Dorsolateral prefrontal cortex (tissue), 120 donors: ENCODE measurements at regions of chr2 and their contacts with region 1.

Region 1: DNA sequence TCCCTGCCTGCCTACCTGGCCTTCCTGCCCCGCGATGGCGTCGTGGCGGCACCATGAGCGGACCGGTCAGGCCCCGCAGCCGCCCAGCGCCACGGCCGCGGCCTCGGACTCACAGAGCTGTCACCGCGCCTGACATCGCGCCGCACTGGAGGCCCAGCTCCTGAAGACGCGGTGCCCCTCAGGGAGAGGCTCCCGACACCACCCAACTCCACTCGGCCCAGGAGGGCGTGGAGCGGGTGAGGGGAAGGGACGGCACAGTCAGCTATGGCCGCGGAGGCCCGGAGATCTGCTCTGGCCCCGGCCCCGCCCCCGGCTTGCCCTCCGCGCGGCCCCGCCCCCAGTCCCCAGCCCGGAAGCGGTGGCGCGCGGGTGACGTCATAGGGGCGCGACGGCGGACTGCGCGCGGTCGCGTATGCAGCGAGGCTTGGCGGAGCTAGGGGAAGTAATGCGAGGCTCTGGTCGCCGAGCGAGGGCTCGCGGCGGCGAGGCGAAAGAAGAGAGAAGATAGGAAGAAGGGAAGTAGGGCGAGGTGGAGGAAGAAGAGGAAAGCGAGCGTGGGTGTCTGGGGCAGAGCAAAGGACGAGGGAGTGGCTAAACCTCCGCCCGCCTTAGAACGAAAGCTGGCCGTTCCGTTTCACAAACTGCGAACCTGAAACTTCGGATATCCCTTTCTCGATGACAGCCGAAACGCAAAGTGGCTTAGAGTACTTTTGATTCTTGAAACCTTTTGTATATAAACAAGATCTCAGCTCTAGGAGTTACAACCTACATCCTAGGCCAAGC is at the start of gene SLC35F5:
- DNase-seq: peak; percentile 76 to 97 (median 88)
- H3K4me3 ChIP-seq: peak within 1 kb of the TSS; percentile 56 to 100 (median 96)
- H3K27ac ChIP-seq: peak within 1 kb of the TSS; percentile 37 to 97 (median 90)
- H3K27me3 ChIP-seq: no peaks in the 10 kb centered on the region
- CTCF ChIP-seq: peak in 30 of 56 donors; percentile 4 to 62 (median 26)
- total RNA-seq, gene SLC35F5: 30.6 to 64.6 (median 45.6) TPM

Region 2: DNA sequence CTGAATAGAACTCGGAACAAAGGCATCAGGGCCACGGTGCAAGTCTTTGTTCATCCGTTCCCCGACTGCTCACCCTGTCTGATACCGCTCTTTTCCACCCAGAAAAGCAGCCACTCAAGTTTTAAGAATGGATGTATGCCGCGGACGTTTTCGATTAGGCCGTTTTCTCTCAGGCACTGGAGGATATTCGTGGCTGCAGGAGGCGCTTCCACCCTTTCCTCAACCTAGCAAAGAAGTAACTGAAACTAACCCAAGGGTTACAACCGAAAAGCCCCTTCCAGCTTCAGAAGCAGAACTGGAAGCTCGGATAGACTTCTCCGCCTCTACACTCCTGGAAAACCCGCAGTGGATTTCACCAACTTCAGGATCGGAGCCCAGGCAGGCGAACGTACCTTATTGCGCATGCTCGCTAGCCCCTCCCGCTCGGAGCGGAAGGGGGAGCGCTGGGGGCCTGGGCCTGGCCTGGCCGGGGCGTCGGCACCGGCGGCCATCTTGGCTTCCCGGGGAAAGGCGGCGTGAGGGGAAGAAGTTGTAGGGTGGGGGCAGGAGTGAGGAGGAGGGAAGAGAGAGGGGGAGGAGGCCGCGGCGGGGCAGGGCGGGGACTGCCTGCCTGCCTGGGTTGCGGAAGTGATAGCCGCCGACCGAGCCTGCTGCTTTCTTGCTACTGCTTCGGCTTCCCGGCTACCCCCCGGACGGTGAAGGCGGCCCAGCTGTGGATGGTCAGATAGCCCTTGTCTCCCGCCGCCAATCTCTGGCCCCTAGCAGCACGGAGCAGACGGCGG is 133.1 kb after region 1 on chr2 and contains the start of gene ACTR3:
- intact Hi-C with region 1: loop called (anchors 1 kb)
- DNase-seq: peak; percentile 89 to 97 (median 94)
- H3K4me3 ChIP-seq: peak within 1 kb of the TSS; percentile 69 to 99 (median 89)
- H3K27ac ChIP-seq: peak within 1 kb of the TSS; percentile 74 to 98 (median 94)
- H3K27me3 ChIP-seq: no peaks in the 10 kb centered on the region
- CTCF ChIP-seq: peak in 24 of 56 donors; percentile 3 to 43 (median 27)
- total RNA-seq, gene ACTR3: 89.6 to 176 (median 126) TPM